ENCODE measurements at regions of chr21 and their contacts with region 1.

Region 1: DNA sequence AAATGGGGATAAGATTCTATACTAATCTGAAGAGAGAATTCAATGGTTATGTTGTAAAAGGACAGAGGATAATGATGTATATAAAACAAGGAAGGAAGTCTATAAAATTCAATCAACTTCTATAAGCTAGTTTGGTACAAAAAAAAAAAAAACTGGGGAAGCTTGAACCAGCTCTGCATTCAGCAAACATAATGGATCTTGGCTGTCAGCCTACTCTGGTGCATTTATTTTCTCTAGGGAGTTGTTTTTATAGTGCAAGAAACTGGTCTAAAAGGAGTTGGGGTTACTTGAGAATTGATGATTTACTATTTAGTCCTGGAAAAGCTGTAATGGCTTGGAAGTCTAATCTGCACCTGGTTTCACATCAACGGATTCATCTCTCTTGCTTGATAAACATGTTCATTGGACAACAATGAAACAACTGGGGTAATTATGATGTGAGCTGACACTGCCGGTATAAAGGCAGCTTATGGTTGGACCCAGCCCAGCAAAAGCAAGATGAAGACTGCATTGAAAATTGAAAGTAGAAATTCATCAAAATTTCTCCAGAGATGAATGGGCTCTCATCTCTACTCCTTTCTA is 199.4 kb upstream of the NRIP1 start:
- DNase-seq: no peak
- ATAC-seq: no peak
- H3K4me3 ChIP-seq: no peak overlapping the region
- H3K27ac ChIP-seq: no peak overlapping the region
- H3K4me1 ChIP-seq: no peaks in the 10 kb centered on the region
- H3K27me3 ChIP-seq: no peaks in the 10 kb centered on the region
- CTCF ChIP-seq: no peak
- POLR2A ChIP-seq: no peak
- RAD21 ChIP-seq: no peak

Region 2: GRCh38 chr21:14382835-14383594 is 881.2 kb before region 1 on chr21 and contains the start of gene HSPA13:
- CTCF ChIA-PET with region 1: no interaction called
- POLR2A ChIA-PET with region 1: no interaction called
- dilution Hi-C with region 1: no loop called
- in situ Hi-C with region 1: no loop called
- intact Hi-C with region 1: no loop called
- DNase-seq: peak; percentile 99
- ATAC-seq: peak; percentile 97
- H3K4me3 ChIP-seq: peak within 1 kb of the TSS; percentile 72
- H3K27ac ChIP-seq: peak within 1 kb of the TSS; percentile 78
- H3K4me1 ChIP-seq: no peaks in the 10 kb centered on the region
- H3K27me3 ChIP-seq: no peaks in the 10 kb centered on the region
- CTCF ChIP-seq: 0 out of 2 replicates have a peak, but pooled peaks have one; percentile 12
- POLR2A ChIP-seq: peak; percentile 90
- RAD21 ChIP-seq: no peak
- total RNA-seq, gene HSPA13: 43.7 and 68.9 TPM in 2 replicates

Region 3: DNA sequence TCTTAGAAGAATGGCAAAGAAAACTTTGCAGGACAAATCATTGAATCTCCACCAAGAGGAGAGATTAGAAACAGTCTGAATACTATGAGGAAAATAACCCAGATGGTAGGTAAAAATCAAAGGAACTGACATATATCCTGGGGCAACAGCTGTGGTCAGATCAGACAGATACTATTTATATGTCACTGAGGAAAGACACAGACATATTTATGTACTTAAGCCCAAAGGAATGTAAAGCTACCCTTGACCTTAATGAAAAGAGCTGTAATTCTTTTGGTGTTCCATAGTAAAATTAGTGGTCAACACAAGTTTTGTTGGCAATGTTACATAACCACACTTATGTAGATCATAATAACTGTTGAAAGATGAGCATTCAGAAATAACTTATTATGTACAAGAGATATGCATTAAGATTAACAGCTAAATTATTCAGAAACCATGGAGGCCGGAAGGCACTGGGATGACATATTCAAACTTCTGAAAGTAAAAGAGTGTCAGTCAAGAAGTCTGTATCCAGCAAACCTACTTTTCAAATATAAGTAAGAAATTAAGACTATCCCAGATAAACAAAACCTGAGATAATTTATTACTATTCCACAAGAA is 552.0 kb before region 1 on chr21:
- CTCF ChIA-PET with region 1: no interaction called
- POLR2A ChIA-PET with region 1: no interaction called
- dilution Hi-C with region 1: no loop called
- in situ Hi-C with region 1: no loop called
- intact Hi-C with region 1: no loop called
- DNase-seq: no peak
- ATAC-seq: no peak
- H3K4me3 ChIP-seq: no peak overlapping the region
- H3K27ac ChIP-seq: no peak overlapping the region
- H3K4me1 ChIP-seq: no peaks in the 10 kb centered on the region
- H3K27me3 ChIP-seq: no peaks in the 10 kb centered on the region
- CTCF ChIP-seq: no peak
- POLR2A ChIP-seq: no peak
- RAD21 ChIP-seq: no peak

Region 4: GRCh38 chr21:15247613-15248012 is 16.6 kb before region 1 on chr21:
- CTCF ChIA-PET with region 1: no interaction called
- POLR2A ChIA-PET with region 1: interaction called, 14 read pairs
- dilution Hi-C with region 1: no loop called
- in situ Hi-C with region 1: no loop called
- intact Hi-C with region 1: no loop called
- DNase-seq: peak; percentile 8
- ATAC-seq: no peak
- H3K4me3 ChIP-seq: no peak overlapping the region
- H3K27ac ChIP-seq: no peak overlapping the region
- H3K4me1 ChIP-seq: no peaks in the 10 kb centered on the region
- H3K27me3 ChIP-seq: no peaks in the 10 kb centered on the region
- CTCF ChIP-seq: no peak
- POLR2A ChIP-seq: no peak
- RAD21 ChIP-seq: no peak